Mammary epithelial cell (primary cell): ENCODE measurements at regions of chr20 and their contacts with region 1.

Region 1: GRCh38 chr20:17179840-17180239 is 47.0 kb upstream of the PCSK2 start:
- DNase-seq: no peak
- H3K4me3 ChIP-seq: no peak overlapping the region
- H3K27ac ChIP-seq: no peak overlapping the region
- H3K4me1 ChIP-seq: no peaks in the 10 kb centered on the region
- H3K27me3 ChIP-seq: no peaks in the 10 kb centered on the region
- CTCF ChIP-seq: no peak

Region 2: DNA sequence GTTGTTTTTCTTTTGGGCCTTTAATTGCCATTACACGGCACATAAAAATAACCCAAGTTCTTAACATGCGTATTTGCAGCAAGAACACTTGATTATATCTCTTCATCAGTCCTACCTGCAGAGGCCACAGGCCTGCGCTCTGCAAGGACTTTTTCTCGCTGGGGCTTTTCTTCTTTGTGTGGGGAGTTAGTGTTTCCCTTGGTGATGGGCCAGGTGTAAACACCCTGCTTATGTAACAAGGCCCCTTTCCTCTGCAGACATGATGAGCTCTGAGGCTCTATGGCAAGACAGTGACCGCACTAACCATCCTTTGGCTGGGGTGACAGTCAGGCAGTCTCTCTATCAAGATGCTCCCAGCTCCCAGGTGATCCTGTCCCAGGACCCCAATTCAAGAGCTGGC is 50.8 kb before region 1 on chr20:
- CTCF ChIA-PET with region 1: no interaction called
- dilution Hi-C with region 1: no loop called
- in situ Hi-C with region 1: no loop called
- intact Hi-C with region 1: loop called (anchors 10 kb)
- DNase-seq: no peak
- H3K4me3 ChIP-seq: no peak overlapping the region
- H3K27ac ChIP-seq: no peak overlapping the region
- H3K4me1 ChIP-seq: no peaks in the 10 kb centered on the region
- H3K27me3 ChIP-seq: no peaks in the 10 kb centered on the region
- CTCF ChIP-seq: no peak

Region 3: DNA sequence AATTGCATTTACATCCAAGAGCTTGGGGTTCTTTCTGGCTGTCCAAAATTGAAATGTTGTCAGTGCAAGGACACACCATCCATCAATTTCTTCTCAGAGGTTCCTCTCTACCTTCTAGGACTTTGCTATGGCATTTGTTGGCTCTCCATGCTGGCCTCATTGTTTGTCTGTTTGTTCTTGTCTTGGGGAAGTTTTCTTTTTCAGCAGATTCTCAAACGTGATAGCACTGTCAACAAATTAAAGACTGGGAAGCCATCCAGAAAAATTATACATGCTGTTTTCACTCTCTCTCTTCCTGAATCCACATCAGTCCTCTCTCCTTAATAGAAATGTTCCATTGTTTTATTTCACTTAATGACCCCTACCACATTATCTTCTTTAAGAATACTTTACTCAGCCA is 177.4 kb after region 1 on chr20:
- CTCF ChIA-PET with region 1: no interaction called
- dilution Hi-C with region 1: no loop called
- in situ Hi-C with region 1: no loop called
- intact Hi-C with region 1: no loop called
- DNase-seq: no peak
- H3K4me3 ChIP-seq: no peak overlapping the region
- H3K27ac ChIP-seq: no peak overlapping the region
- H3K4me1 ChIP-seq: no peaks in the 10 kb centered on the region
- H3K27me3 ChIP-seq: no peaks in the 10 kb centered on the region
- CTCF ChIP-seq: no peak